ENCODE measurements at regions of chr20 and their contacts with region 1.

Region 1: GRCh38 chr20:35329435-35330139 is 37.4 kb upstream of the FAM83C start:
- DNase-seq: peak; percentile 72 to 84
- ATAC-seq: peak; percentile 86 to 91
- H3K4me3 ChIP-seq: no peak overlapping the region
- H3K27ac ChIP-seq: peak overlapping the region; percentile 77 to 82
- H3K4me1 ChIP-seq: peaks cover 47% of the 10 kb centered on the region
- CTCF ChIP-seq: peak; percentile 84
- EP300 ChIP-seq: no peak
- POLR2A ChIP-seq: no peak
- RAD21 ChIP-seq: peak; percentile 65 to 79

Region 2: DNA sequence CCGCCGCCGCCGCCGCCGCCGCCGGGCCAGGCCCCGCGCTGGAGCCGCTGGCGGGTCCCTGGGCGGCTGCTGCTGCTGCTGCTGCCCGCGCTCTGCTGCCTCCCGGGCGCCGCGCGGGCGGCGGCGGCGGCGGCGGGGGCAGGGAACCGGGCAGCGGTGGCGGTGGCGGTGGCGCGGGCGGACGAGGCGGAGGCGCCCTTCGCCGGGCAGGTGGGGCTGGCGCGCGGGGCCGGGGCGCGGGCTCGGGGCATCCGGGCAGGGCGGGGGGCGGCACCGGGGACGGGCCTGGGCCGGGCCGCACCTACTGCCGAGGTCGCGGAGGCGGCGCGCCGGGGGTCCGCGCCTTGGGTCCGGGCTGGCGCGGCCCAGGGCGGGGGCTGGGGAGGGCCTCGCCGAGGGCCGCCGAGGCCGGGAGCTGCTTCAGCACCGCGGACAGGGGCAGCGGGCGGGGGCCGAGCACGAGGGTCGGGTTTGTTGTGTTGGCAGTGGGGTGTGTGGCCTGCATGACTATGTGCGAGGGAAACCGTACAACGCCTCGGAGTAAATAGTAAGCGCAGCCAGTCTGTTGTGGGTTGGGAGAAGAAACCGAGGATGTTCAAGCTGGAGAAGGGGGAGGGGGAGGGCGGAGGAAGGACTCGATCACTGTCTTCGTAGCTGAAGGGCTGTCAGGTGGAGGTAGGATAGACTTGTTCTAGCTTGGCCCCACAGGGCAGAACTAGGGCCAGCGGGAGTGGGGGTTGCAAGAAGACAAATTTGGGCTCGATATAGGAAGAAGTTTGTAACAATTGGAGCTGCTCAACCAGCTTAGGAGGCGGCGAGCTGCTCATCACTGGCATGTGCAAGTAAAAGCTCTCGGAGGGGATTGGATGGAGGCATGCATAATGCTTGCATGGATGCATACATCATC is 102.6 kb before region 1 on chr20:
- CTCF ChIA-PET with region 1: no interaction called
- POLR2A ChIA-PET with region 1: no interaction called
- DNase-seq: peak; percentile 49 to 50
- ATAC-seq: peak; percentile 84 to 92
- H3K4me3 ChIP-seq: peak overlapping the region; percentile 65
- H3K27ac ChIP-seq: peak overlapping the region; percentile 61 to 93; a peak in 5 of 6 replicates
- H3K4me1 ChIP-seq: peaks cover 18% of the 10 kb centered on the region; the same call in 2 of the 3 replicates
- CTCF ChIP-seq: no peak
- EP300 ChIP-seq: no peak
- POLR2A ChIP-seq: no peak
- RAD21 ChIP-seq: 0 out of 5 replicates have a peak, but pooled peaks of 1 of the 2 experiments have one; percentile 15

Region 3: DNA sequence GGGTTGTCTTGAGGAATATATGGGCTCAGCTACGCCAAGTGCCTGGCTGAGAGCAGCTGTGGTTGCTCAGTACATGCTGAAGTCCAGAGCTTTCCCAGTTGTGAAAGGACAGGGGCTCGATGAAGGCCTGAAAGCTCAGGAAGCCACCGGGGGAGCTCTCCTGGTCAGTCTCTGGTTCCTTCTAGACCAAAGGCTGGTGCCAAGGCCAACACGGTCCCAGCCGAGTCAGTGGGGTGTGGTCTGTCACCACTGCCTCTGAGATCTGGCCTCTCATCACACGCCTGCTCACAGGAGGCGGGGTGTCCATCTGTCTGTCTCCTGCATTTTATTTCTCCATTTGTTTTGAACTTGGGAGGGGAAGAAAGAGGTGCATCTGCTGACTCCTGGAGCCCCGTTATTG is 32.4 kb before region 1 on chr20:
- CTCF ChIA-PET with region 1: interaction called, 157 read pairs
- POLR2A ChIA-PET with region 1: no interaction called
- DNase-seq: peak in 1 of 2 experiments; percentile 40
- ATAC-seq: peak; percentile 52 to 67; a peak in 5 of 6 replicates
- H3K4me3 ChIP-seq: no peak overlapping the region
- H3K27ac ChIP-seq: no peak overlapping the region
- H3K4me1 ChIP-seq: peaks cover 5% of the 10 kb centered on the region; the same call in 2 of the 3 replicates
- CTCF ChIP-seq: no peak
- EP300 ChIP-seq: no peak
- POLR2A ChIP-seq: no peak
- RAD21 ChIP-seq: no peak

Region 4: GRCh38 chr20:35318502-35319157 is 11.0 kb before region 1 on chr20:
- CTCF ChIA-PET with region 1: interaction called, 16 read pairs
- POLR2A ChIA-PET with region 1: no interaction called
- DNase-seq: peak; percentile 64 to 87
- ATAC-seq: peak; percentile 78 to 82
- H3K4me3 ChIP-seq: no peak overlapping the region
- H3K27ac ChIP-seq: peak overlapping the region; percentile 76 to 89
- H3K4me1 ChIP-seq: peaks cover 57% of the 10 kb centered on the region
- CTCF ChIP-seq: no peak
- EP300 ChIP-seq: peak; percentile 12 to 40; a peak in 1 of 5 replicates
- POLR2A ChIP-seq: no peak
- RAD21 ChIP-seq: no peak

Region 5: DNA sequence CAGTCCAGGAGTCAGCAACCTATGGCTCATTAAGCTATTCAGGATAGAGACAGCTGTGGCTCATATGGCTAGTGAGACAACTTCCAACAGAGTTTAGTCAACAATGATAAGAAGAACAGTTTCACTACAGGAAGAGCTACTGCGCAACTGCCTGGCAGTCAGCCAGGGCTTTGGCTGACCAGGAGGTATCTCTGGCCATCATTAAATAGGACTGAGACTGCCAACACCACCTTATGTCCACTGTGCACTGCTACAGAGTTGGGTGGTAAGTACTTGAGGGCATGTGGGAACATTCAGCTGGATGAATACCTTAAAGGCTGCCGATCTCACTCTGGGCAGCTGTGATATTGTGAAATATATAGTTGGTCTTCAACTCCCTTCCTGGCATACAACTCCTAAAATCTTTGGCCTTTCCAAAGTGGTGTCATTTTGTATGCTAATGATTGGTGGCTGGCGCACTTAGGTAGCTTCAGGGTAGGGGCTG is 14.8 kb after region 1 on chr20:
- CTCF ChIA-PET with region 1: interaction called, 32 read pairs
- POLR2A ChIA-PET with region 1: no interaction called
- DNase-seq: peak in 1 of 2 experiments; percentile 63
- ATAC-seq: peak; percentile 56 to 76; a peak in 5 of 6 replicates
- H3K4me3 ChIP-seq: no peak overlapping the region
- H3K27ac ChIP-seq: peak overlapping the region; percentile 7 to 60; a peak in 4 of 6 replicates
- H3K4me1 ChIP-seq: peaks cover 17% of the 10 kb centered on the region
- CTCF ChIP-seq: no peak
- EP300 ChIP-seq: no peak
- POLR2A ChIP-seq: no peak
- RAD21 ChIP-seq: no peak

Region 6: GRCh38 chr20:35529552-35529951 is 200.0 kb after region 1 on chr20 and contains the start of gene C20orf173:
- CTCF ChIA-PET with region 1: no interaction called
- POLR2A ChIA-PET with region 1: no interaction called
- DNase-seq: no peak
- ATAC-seq: no peak
- H3K4me3 ChIP-seq: no peak within 1 kb of the TSS
- H3K27ac ChIP-seq: no peak within 1 kb of the TSS
- H3K4me1 ChIP-seq: no peaks in the 10 kb centered on the region
- CTCF ChIP-seq: no peak
- EP300 ChIP-seq: no peak
- POLR2A ChIP-seq: no peak
- RAD21 ChIP-seq: no peak
- polyA plus RNA-seq, gene C20orf173: not detected in 2 replicates

Measured in A549 (cell line).